ENCODE measurements at regions of chr10 and their contacts with region 1.

Region 1: DNA sequence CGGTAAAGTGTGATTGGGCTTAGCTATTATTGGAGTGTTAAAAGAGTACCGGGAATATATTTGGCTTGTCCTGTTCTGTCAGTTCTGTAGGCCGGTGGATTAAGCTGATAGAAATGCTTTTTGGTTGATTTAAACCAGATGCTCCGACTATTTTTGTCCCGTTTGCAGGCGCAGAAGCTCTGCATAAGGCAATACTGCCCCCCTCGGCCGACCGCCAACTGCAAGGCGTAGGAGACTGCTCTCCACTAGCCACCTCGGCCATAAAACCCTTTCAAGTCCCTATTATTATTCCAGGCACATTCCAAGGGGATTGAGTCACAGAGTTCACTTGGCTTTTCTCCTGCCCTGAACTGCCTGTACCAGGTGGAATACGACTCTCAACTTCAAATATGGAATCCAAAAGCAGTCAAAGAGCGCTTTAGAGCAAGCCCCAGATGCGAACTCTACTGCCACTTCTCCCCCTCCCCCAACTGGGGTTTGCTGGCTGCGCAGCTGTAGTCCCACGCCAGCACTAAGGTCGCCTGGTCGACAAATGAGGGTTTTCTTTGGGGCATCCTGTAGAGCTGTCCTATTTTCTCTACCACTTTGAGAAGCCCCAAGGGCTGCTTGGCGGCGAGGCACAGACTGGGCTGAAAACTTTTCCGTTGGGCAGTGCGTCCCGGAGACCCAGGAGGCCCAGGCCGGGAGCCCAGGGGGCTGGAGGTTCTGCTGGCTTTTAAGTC is 108.3 kb downstream of the REEP3 start:
- DNase-seq: peak; percentile 98
- H3K4me3 Mint-ChIP-seq: peak overlapping the region; percentile 94
- H3K27ac Mint-ChIP-seq: peak overlapping the region; percentile 94
- H3K4me1 Mint-ChIP-seq: peaks cover 26% of the 10 kb centered on the region
- H3K27me3 Mint-ChIP-seq: no peaks in the 10 kb centered on the region
- CTCF ChIP-seq: peak; percentile 73

Region 2: DNA sequence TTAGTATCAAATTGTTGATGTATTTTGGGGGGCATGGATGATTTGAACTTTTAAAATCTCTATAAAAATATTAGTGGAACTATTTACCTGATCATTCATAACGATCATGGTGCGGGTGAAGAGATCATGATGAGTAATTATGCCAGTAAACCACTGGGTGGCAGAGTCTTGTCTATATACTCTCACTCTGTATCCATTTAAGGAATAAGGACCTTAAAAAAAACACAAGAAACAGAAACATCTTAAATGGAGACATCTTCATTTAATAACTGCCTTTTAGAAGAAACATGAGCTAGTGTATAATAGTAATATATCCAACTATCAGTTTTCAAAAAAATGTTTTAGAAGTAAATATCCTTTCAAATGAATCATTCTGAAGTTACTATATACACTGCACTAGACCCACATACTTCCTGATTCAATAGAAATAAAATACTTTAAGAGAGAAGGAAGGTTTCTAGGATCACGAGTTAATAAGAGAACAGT is 412.4 kb before region 1 on chr10:
- CTCF ChIA-PET with region 1: interaction called, 21 read pairs
- POLR2A ChIA-PET with region 1: interaction called, 43 read pairs
- intact Hi-C with region 1: loop called (anchors 1 kb)
- DNase-seq: peak; percentile 66
- H3K4me3 Mint-ChIP-seq: no peak overlapping the region
- H3K27ac Mint-ChIP-seq: peak overlapping the region; percentile 39
- H3K4me1 Mint-ChIP-seq: peaks cover 10% of the 10 kb centered on the region
- H3K27me3 Mint-ChIP-seq: no peaks in the 10 kb centered on the region
- CTCF ChIP-seq: peak; percentile 56

Region 3: DNA sequence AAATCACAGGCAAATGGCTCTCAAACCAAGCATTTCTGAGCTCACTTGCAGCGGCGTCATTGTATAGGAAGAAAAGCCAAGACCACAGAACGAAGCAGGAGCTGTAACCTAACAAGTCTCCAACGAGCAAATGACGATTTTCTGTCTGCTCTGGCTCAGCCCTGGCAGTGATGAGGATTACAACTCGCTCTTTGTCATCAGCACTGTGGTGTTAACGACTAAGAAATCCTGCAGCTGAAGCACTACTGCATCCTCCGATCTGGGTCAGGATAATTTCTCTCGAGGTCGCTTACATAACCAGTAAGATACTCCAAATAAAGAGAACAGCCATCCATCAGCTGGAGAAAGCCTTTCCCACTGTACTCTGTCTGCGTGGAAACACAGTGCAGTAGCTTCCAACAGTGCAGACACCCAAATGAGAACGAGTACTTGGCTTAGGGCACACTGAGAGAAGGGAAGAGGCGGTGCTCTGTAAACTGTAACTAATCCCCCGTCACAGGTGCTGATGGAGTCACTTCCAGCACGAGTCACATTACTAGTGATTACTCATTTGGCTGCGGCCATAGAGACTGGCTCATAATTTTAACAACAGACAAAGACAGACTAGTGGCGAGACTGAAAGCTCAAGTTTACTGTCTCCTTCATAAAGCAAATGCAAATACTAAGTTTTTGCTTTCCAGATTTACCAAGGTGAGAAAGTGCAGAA is 360.6 kb before region 1 on chr10:
- CTCF ChIA-PET with region 1: interaction called, 7 read pairs
- POLR2A ChIA-PET with region 1: interaction called, 106 read pairs
- intact Hi-C with region 1: loop called (anchors 1 kb)
- DNase-seq: peak; percentile 97
- H3K4me3 Mint-ChIP-seq: peak overlapping the region; percentile 86
- H3K27ac Mint-ChIP-seq: peak overlapping the region; percentile 96
- H3K4me1 Mint-ChIP-seq: peaks cover 5% of the 10 kb centered on the region
- H3K27me3 Mint-ChIP-seq: no peaks in the 10 kb centered on the region
- CTCF ChIP-seq: peak; percentile 21

Region 4: GRCh38 chr10:63407136-63407662 is 222.3 kb before region 1 on chr10:
- CTCF ChIA-PET with region 1: no interaction called
- POLR2A ChIA-PET with region 1: no interaction called
- intact Hi-C with region 1: no loop called
- DNase-seq: no peak
- H3K4me3 Mint-ChIP-seq: no peak overlapping the region
- H3K27ac Mint-ChIP-seq: peak overlapping the region; percentile 75
- H3K4me1 Mint-ChIP-seq: peaks cover 14% of the 10 kb centered on the region
- H3K27me3 Mint-ChIP-seq: no peaks in the 10 kb centered on the region
- CTCF ChIP-seq: no peak

Region 5: GRCh38 chr10:63515002-63515763 is 114.3 kb before region 1 on chr10:
- CTCF ChIA-PET with region 1: interaction called, 3 read pairs
- POLR2A ChIA-PET with region 1: interaction called, 99 read pairs
- intact Hi-C with region 1: no loop called
- DNase-seq: peak; percentile 42
- H3K4me3 Mint-ChIP-seq: peak overlapping the region; percentile 65
- H3K27ac Mint-ChIP-seq: peak overlapping the region; percentile 97
- H3K4me1 Mint-ChIP-seq: peaks cover 59% of the 10 kb centered on the region
- H3K27me3 Mint-ChIP-seq: no peaks in the 10 kb centered on the region
- CTCF ChIP-seq: no peak

Region 6: GRCh38 chr10:63588436-63589167 is 40.9 kb before region 1 on chr10:
- CTCF ChIA-PET with region 1: no interaction called
- POLR2A ChIA-PET with region 1: interaction called, 13 read pairs
- intact Hi-C with region 1: no loop called
- DNase-seq: peak; percentile 26
- H3K4me3 Mint-ChIP-seq: no peak overlapping the region
- H3K27ac Mint-ChIP-seq: no peak overlapping the region
- H3K4me1 Mint-ChIP-seq: no peaks in the 10 kb centered on the region
- H3K27me3 Mint-ChIP-seq: no peaks in the 10 kb centered on the region
- CTCF ChIP-seq: no peak

Region 7: DNA sequence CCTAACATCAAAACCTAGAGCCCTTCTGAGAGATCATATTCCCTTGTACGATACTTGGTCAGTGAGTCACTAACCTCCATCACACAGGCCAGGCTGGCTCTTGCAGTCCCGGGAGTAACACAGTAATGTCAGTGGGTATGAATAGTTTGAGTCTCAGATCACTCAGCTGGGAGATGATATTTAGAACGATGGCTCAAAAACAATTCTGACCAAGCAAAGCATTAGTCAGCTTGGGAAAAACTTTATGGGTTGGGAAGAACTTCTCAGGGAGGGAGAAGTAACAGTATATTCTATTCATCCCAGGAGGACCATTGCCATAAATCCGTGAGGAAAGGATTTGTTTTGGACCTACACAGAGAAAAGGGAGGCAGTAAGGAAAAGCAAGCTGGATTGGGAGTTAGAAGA is 70.7 kb after region 1 on chr10:
- CTCF ChIA-PET with region 1: interaction called, 9 read pairs
- POLR2A ChIA-PET with region 1: interaction called, 16 read pairs
- intact Hi-C with region 1: no loop called
- DNase-seq: peak; percentile 90
- H3K4me3 Mint-ChIP-seq: peak overlapping the region; percentile 15
- H3K27ac Mint-ChIP-seq: peak overlapping the region; percentile 91
- H3K4me1 Mint-ChIP-seq: peaks cover 32% of the 10 kb centered on the region
- H3K27me3 Mint-ChIP-seq: no peaks in the 10 kb centered on the region
- CTCF ChIP-seq: no peak

Region 8: DNA sequence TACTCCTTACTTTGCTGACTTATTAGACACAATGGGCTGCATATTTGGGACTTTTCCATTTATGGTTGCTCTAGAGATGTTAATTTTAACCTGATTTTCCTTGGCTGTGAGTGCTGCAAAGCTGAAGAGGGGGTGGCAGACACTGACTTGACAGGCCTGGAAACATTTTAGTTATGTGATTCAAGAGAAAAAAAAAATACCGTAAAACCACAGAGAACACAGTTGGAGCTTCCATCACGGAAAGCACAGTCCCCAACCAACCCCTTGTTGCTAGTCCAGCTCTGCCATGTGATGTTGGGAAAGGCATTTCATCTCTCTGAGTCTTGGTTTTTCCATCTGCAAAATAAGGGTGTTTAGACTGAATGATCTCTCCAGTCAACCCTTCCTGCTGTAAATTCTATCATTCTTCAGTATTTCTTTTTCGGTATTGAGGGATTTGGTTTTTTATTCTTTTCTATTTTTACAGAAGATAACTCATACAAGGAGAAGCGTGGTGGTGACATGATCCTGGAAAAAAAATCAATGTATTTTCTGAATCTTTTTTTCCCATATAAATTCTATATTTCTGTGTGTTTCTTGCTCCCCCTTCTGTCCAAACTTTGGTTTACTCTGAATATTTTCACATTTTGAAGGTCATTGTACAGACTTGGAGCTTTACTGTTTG is 137.7 kb after region 1 on chr10:
- CTCF ChIA-PET with region 1: no interaction called
- POLR2A ChIA-PET with region 1: interaction called, 3 read pairs
- intact Hi-C with region 1: loop called (anchors 2 kb)
- DNase-seq: peak; percentile 29
- H3K4me3 Mint-ChIP-seq: no peak overlapping the region
- H3K27ac Mint-ChIP-seq: no peak overlapping the region
- H3K4me1 Mint-ChIP-seq: peaks cover 13% of the 10 kb centered on the region
- H3K27me3 Mint-ChIP-seq: peaks cover under 1% of the 10 kb centered on the region
- CTCF ChIP-seq: peak; percentile 39

Region 9: DNA sequence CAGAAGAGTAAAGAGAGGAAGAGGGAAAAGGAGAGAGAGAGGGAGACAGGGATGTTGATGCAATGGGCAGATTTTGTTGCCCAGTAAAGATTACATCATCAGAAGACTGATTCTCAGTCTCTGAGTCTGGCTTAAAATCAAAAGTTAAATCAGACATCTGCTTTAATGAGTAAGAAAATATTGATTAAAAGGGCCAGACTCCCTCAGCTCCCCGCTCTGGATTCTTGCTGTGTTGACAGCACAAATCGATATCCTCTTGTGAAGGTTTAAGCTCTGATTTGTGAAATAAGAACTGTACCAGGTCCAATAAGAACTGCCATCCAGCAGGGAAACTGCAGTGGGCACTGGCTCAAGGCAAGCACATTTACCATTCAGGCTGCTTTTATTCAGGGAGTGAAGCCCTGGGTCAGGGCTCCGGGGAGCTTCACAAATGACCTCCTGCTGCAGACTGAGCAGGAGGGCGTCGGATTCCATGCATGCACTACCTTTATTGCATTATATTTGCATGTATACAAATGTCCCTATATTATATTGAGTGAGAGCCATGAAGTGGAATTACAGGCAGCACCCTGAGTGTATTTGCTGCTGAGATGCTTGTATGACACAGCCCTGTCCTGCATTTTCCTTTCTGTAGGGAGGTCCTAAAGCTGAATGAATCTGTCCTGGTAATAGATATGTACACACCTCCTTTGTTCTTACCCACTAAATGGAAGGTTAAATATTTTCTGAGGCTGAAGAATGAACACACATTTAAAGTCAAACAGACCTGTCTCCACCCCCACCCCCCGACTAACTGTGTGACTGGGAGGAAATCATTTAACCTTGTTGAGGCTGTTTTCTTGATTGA is 293.2 kb after region 1 on chr10:
- CTCF ChIA-PET with region 1: no interaction called
- POLR2A ChIA-PET with region 1: no interaction called
- intact Hi-C with region 1: no loop called
- DNase-seq: no peak
- H3K4me3 Mint-ChIP-seq: no peak overlapping the region
- H3K27ac Mint-ChIP-seq: no peak overlapping the region
- H3K4me1 Mint-ChIP-seq: peaks cover 6% of the 10 kb centered on the region
- H3K27me3 Mint-ChIP-seq: no peaks in the 10 kb centered on the region
- CTCF ChIP-seq: no peak